CD14-positive monocyte (primary cell): ENCODE measurements at regions of chr7 and their contacts with region 1.

Region 1: GRCh38 chr7:4641667-4642467 is 40.2 kb upstream of the FOXK1 start:
- DNase-seq: peak; percentile 93 to 94 (median 94)
- H3K4me3 ChIP-seq: peak overlapping the region; percentile 60 to 88 (median 83)
- H3K4me3 Mint-ChIP-seq: peak overlapping the region; percentile 85 to 88
- H3K27ac ChIP-seq: peak overlapping the region; percentile 71 to 92
- H3K27ac Mint-ChIP-seq: peak overlapping the region; percentile 87 to 93 (median 90)
- H3K4me1 ChIP-seq: peaks cover 12 to 15% of the 10 kb centered on the region in 2 donors
- H3K4me1 Mint-ChIP-seq: peaks cover 9% of the 10 kb centered on the region
- H3K27me3 ChIP-seq: no peaks in the 10 kb centered on the region
- H3K27me3 Mint-ChIP-seq: peaks cover 0 to 3% (median 0%) of the 10 kb centered on the region in 3 donors
- CTCF ChIP-seq: peak; percentile 36

Region 2: DNA sequence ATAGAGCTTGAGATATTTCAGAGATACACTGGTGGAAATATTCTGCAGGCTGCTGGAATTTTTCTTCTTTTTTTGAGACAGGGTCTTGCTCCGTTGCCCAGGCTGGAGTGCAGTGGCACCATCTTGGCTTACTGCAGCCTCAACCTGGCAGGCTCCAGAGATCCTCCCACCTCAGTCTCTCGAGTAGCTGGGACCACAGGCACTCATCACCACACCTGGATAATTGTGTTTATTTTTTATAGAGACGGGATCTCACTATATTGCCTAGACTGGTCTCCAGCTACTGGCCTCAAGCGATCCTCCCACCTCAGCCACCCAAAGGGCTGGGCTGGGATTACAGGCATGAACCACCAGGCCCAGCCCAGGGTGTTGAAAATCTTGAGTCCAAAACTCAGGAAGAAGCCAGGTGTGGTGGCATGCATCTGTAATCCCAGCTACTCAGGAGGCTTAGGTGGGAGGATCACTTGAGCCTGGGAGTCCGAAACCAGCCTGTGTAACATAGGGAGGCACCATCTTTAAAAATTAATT is 15.5 kb before region 1 on chr7:
- intact Hi-C with region 1: loop called in 1 of 2 experiments (anchors 1 kb)
- DNase-seq: no peak
- H3K4me3 ChIP-seq: no peak overlapping the region
- H3K4me3 Mint-ChIP-seq: no peak overlapping the region
- H3K27ac ChIP-seq: no peak overlapping the region
- H3K27ac Mint-ChIP-seq: no peak overlapping the region
- H3K4me1 ChIP-seq: peaks cover 4 to 10% of the 10 kb centered on the region in 2 donors
- H3K4me1 Mint-ChIP-seq: peaks cover 14% of the 10 kb centered on the region
- H3K27me3 ChIP-seq: no peaks in the 10 kb centered on the region
- H3K27me3 Mint-ChIP-seq: peaks cover 2 to 10% (median 4%) of the 10 kb centered on the region in 3 donors
- CTCF ChIP-seq: no peak

Region 3: DNA sequence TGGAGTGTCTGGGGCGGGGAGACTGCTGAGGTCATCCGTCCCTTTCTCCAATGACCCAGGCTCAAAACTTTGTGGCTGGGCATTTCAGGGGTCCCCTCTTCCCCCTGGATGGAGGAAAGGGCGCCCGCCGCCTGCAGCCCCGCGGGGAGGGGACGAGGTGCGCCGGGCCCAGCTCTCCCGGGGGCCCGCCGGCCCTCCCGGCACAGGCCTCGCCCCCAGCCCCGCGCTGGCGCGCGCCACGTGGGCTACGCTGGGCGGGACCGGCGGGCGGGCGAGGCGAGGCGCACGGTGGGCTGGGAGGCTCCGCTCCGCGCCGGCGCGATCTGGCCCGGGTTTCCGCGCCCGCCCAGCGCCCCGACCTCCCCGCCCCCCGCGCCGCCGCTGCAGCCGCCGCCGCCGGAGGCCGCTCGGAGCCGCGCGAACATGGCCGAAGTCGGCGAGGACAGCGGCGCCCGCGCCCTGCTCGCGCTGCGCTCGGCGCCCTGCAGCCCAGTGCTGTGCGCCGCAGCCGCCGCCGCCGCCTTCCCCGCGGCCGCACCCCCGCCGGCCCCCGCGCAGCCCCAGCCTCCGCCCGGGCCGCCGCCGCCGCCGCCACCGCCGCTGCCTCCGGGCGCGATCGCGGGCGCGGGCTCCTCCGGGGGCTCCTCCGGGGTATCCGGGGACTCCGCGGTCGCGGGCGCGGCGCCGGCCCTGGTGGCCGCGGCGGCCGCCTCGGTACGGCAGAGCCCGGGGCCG is 40.2 kb after region 1 on chr7 and contains the start of gene FOXK1:
- intact Hi-C with region 1: loop called (anchors 1 kb)
- DNase-seq: peak; percentile 49 to 62 (median 59)
- H3K4me3 ChIP-seq: peak within 1 kb of the TSS; percentile 83 to 84 (median 83)
- H3K4me3 Mint-ChIP-seq: peak within 1 kb of the TSS; percentile 86 to 87
- H3K27ac ChIP-seq: peak within 1 kb of the TSS; percentile 77 to 83
- H3K27ac Mint-ChIP-seq: peak within 1 kb of the TSS; percentile 82 to 97 (median 91)
- H3K4me1 ChIP-seq: peaks cover 27 to 29% of the 10 kb centered on the region in 2 donors
- H3K4me1 Mint-ChIP-seq: peaks cover 38% of the 10 kb centered on the region
- H3K27me3 ChIP-seq: no peaks in the 10 kb centered on the region
- H3K27me3 Mint-ChIP-seq: peaks cover 0 to 4% (median 0%) of the 10 kb centered on the region in 3 donors
- CTCF ChIP-seq: no peak
- polyA plus RNA-seq, gene FOXK1: 0.33 to 16.8 (median 0.76) TPM

Region 4: GRCh38 chr7:4725014-4725849 is 83.4 kb after region 1 on chr7:
- intact Hi-C with region 1: no loop called
- DNase-seq: peak; percentile 71 to 80 (median 73)
- H3K4me3 ChIP-seq: peak overlapping the region; percentile 53 to 74 (median 69)
- H3K4me3 Mint-ChIP-seq: peak overlapping the region; percentile 96
- H3K27ac ChIP-seq: peak overlapping the region; percentile 87 to 88
- H3K27ac Mint-ChIP-seq: peak overlapping the region; percentile 93 to 98 (median 97)
- H3K4me1 ChIP-seq: peaks cover 29 to 49% of the 10 kb centered on the region in 2 donors
- H3K4me1 Mint-ChIP-seq: peaks cover 44% of the 10 kb centered on the region
- H3K27me3 ChIP-seq: no peaks in the 10 kb centered on the region
- H3K27me3 Mint-ChIP-seq: no peaks in the 10 kb centered on the region
- CTCF ChIP-seq: no peak

Region 5: GRCh38 chr7:4744391-4745264 is 102.8 kb after region 1 on chr7:
- intact Hi-C with region 1: loop called in 1 of 2 experiments (anchors 2 kb)
- DNase-seq: peak; percentile 41 to 58 (median 50)
- H3K4me3 ChIP-seq: peak overlapping the region; percentile 40 to 77 (median 62)
- H3K4me3 Mint-ChIP-seq: peak overlapping the region; percentile 76 to 88
- H3K27ac ChIP-seq: peak overlapping the region; percentile 77 to 95
- H3K27ac Mint-ChIP-seq: peak overlapping the region; percentile 93 to 97 (median 97)
- H3K4me1 ChIP-seq: peaks cover 40 to 43% of the 10 kb centered on the region in 2 donors
- H3K4me1 Mint-ChIP-seq: peaks cover 44% of the 10 kb centered on the region
- H3K27me3 ChIP-seq: no peaks in the 10 kb centered on the region
- H3K27me3 Mint-ChIP-seq: peaks cover 0 to 2% (median 0%) of the 10 kb centered on the region in 3 donors
- CTCF ChIP-seq: no peak

Region 6: GRCh38 chr7:4753711-4754432 is 112.0 kb after region 1 on chr7:
- intact Hi-C with region 1: loop called in 1 of 2 experiments (anchors 2 kb)
- DNase-seq: peak; percentile 62 to 72 (median 65)
- H3K4me3 ChIP-seq: no peak overlapping the region
- H3K4me3 Mint-ChIP-seq: no peak overlapping the region
- H3K27ac ChIP-seq: no peak overlapping the region
- H3K27ac Mint-ChIP-seq: peak overlapping the region in 1 of 7 donors; percentile 63
- H3K4me1 ChIP-seq: no peaks in the 10 kb centered on the region
- H3K4me1 Mint-ChIP-seq: peaks cover 5% of the 10 kb centered on the region
- H3K27me3 ChIP-seq: no peaks in the 10 kb centered on the region
- H3K27me3 Mint-ChIP-seq: peaks cover 0 to 1% (median 0%) of the 10 kb centered on the region in 3 donors
- CTCF ChIP-seq: peak; percentile 96

Region 7: DNA sequence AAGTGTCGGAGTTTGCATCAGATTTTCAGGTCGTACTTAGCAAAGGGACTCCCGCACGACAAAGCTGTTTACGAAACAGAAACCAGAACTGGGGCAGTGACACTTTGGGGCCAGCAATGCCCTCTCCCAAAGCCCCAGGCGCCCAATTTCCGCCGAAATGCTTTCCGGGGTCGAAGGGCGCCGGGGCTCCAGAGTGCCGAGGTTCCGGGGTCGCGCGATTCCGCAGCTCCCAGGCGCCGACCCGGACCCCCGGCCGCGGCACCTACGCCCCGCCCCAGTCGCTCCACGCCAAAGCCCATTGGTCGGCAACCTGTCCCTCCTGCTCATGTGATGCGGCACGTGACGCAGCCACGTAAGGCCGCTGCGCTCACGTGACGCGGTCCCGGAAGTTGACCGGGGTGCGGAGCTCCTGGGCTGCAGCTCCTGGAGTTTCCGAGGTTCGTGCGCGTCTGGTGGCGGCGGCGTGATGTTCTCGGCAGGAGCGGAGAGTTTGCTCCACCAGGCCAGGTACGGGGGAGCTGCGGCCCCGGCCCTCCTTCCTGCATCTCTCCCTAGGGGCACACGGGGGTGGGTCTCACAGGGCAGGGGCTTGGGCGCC is 133.5 kb after region 1 on chr7 and contains the start of gene AP5Z1:
- intact Hi-C with region 1: loop called in 1 of 2 experiments (anchors 1 kb)
- DNase-seq: peak; percentile 93 to 99 (median 98)
- H3K4me3 ChIP-seq: peak within 1 kb of the TSS; percentile 70 to 89 (median 88)
- H3K4me3 Mint-ChIP-seq: peak within 1 kb of the TSS; percentile 99
- H3K27ac ChIP-seq: peak within 1 kb of the TSS; percentile 97 to 98
- H3K27ac Mint-ChIP-seq: peak within 1 kb of the TSS; percentile 98 to 100 (median 100)
- H3K4me1 ChIP-seq: peaks cover 25 to 32% of the 10 kb centered on the region in 2 donors
- H3K4me1 Mint-ChIP-seq: peaks cover 33% of the 10 kb centered on the region
- H3K27me3 ChIP-seq: no peaks in the 10 kb centered on the region
- H3K27me3 Mint-ChIP-seq: no peaks in the 10 kb centered on the region
- CTCF ChIP-seq: no peak
- polyA plus RNA-seq, gene AP5Z1: 30.8 to 75.2 (median 33.8) TPM

Region 8: DNA sequence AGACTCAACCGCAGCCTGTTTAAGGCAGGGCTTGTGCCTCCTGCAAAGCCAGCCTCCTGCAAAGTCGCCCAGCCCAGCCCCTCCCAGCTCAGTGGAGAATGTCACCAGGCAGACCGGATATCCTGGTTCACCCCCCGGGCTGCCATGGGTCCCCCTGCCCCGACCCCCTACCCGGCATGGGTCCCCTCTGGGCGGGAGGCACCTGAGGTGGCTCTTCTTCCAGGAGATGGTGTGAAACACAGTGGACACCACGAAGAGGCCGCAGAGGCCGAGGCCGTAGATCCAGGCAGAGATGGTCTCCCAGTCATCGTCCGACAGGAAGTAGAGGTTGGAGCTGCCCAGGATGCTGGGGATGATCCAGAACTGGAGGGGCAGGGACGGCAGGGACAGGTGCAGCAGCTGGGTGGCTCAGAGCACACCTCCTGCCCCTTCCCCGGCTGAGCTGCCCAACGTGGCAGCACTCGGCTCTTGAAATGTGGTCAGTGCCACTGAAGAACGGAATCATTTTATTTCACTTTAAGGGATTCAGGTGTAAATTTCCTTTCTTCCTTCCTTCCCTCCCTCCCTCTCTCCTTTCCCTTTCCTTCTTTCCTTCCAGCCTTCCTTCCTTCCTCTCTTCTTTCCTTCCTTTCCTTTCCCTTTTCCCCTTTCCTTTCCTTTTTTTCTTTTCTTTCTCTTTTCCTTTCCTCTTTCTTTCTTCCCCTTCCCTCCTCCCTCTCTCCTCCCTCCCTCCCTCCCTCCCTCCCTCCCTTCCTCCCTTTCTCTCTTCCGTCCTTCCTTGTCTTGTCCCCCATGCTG is 278.3 kb after region 1 on chr7:
- intact Hi-C with region 1: no loop called
- DNase-seq: no peak
- H3K4me3 ChIP-seq: no peak overlapping the region
- H3K4me3 Mint-ChIP-seq: no peak overlapping the region
- H3K27ac ChIP-seq: no peak overlapping the region
- H3K27ac Mint-ChIP-seq: no peak overlapping the region
- H3K4me1 ChIP-seq: no peaks in the 10 kb centered on the region
- H3K4me1 Mint-ChIP-seq: no peaks in the 10 kb centered on the region
- H3K27me3 ChIP-seq: no peaks in the 10 kb centered on the region
- H3K27me3 Mint-ChIP-seq: peaks cover 2 to 13% (median 6%) of the 10 kb centered on the region in 3 donors
- CTCF ChIP-seq: no peak